H1 (cell line): ENCODE measurements at regions of chr1 and their contacts with region 1.

Region 1: DNA sequence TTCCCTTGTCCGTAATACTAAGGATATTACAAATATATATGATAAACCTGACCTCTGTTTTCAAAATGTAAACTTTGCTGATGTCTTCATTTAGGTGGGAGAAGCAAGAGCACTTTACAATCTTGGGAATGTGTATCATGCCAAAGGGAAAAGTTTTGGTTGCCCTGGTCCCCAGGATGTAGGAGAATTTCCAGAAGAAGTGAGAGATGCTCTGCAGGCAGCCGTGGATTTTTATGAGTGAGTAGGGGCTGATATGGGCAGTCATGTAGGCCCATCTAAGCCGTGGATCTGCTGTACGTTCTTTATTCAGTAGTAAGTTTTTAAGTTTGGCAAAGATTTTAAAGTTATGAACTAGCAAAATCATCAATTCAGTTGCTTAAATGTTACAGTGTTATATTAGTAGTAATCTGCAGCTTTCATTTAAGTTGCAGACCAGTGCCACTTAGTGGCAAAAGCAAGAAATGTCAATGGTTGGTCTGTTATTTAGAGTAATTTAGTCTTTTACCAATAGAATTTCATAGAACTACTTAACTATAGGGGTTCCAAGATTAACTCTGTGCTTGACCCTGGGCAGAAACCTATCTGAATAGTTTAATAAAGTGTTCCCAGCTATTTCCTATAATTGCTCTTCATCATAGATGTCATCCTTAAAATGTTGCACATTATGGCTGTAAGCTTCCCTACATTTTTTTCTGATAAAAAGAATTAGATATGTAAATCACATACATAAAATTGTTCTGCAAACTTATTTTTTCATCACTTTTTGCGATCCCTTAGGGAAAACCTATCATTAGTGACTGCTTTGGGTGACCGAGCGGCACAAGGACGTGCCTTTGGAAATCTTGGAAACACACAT is 21.3 kb downstream of the GPSM2 start:
- DNase-seq: no peak
- H3K4me3 ChIP-seq: no peak overlapping the region
- H3K27ac ChIP-seq: no peak overlapping the region
- H3K4me1 ChIP-seq: no peaks in the 10 kb centered on the region
- H3K27me3 ChIP-seq: no peaks in the 10 kb centered on the region
- CTCF ChIP-seq: peak in 2 of 3 experiments; percentile 54 to 59; a peak in 2 of 4 replicates
- EP300 ChIP-seq: no peak
- POLR2A ChIP-seq: no peak
- RAD21 ChIP-seq: peak; percentile 79 to 84

Region 2: GRCh38 chr1:108828022-108828961 is 69.8 kb before region 1 on chr1:
- CTCF ChIA-PET with region 1: interaction called, 160 read pairs
- POLR2A ChIA-PET with region 1: interaction called, 5 read pairs
- DNase-seq: peak; percentile 60 to 87
- H3K4me3 ChIP-seq: no peak overlapping the region
- H3K27ac ChIP-seq: no peak overlapping the region
- H3K4me1 ChIP-seq: peaks cover 0 to 3% (median 2%) of the 10 kb centered on the region in 4 experiments; a peak in 3 of 7 replicates
- H3K27me3 ChIP-seq: no peaks in the 10 kb centered on the region
- CTCF ChIP-seq: peak; percentile 74 to 88 (median 76)
- EP300 ChIP-seq: no peak
- POLR2A ChIP-seq: no peak
- RAD21 ChIP-seq: peak; percentile 75 to 82

Region 3: GRCh38 chr1:108877348-108878159 is 20.5 kb before region 1 on chr1:
- CTCF ChIA-PET with region 1: interaction called, 11 read pairs
- POLR2A ChIA-PET with region 1: no interaction called
- DNase-seq: no peak
- H3K4me3 ChIP-seq: peak overlapping the region; percentile 68 to 93 (median 76)
- H3K27ac ChIP-seq: no peak overlapping the region
- H3K4me1 ChIP-seq: no peaks in the 10 kb centered on the region
- H3K27me3 ChIP-seq: peaks cover 0 to 3% (median 0%) of the 10 kb centered on the region in 4 experiments; a peak in 1 of 7 replicates
- CTCF ChIP-seq: no peak
- EP300 ChIP-seq: no peak
- POLR2A ChIP-seq: no peak
- RAD21 ChIP-seq: no peak

Region 4: DNA sequence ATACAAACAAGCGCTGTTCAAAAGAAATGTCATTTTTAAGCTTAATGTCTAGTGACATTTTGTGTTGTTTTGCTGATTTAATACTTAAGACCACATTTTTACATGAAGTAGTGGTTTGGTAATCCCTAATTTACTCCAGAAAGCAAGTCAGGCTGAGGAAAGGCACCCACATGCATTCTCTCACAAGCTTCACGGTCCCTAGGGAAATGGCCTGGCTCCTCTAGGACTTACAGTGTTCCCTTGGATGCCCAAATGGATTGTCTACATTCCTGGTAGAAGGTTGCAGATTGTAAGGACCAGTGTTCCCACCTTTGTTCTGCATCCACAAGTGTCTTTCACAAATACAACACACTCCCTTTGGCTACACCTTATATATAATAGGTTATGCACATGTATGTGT is 11.8 kb before region 1 on chr1:
- CTCF ChIA-PET with region 1: interaction called, 12 read pairs
- POLR2A ChIA-PET with region 1: interaction called, 6 read pairs
- DNase-seq: no peak
- H3K4me3 ChIP-seq: no peak overlapping the region
- H3K27ac ChIP-seq: no peak overlapping the region
- H3K4me1 ChIP-seq: no peaks in the 10 kb centered on the region
- H3K27me3 ChIP-seq: no peaks in the 10 kb centered on the region
- CTCF ChIP-seq: no peak
- EP300 ChIP-seq: no peak
- POLR2A ChIP-seq: no peak
- RAD21 ChIP-seq: no peak

Region 5: DNA sequence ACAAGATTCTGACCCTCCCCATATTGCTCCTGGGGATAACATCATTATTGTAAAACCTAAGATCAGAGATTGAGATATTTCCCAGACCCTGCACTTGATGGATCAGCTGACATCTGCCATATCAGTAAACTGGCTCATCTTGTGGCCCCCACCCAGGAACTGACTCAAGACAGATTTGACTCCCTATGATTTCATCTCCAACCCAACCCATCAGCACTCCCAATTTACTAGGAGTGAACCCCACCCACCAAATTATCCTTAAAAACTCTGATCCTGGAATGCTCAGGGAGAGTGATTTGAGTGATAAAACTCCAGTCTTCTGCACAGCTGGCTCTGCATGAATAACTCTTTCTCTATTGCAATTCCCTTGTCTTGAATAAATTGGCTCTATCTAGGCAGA is 71.3 kb after region 1 on chr1:
- CTCF ChIA-PET with region 1: no interaction called
- POLR2A ChIA-PET with region 1: no interaction called
- DNase-seq: no peak
- H3K4me3 ChIP-seq: no peak overlapping the region
- H3K27ac ChIP-seq: no peak overlapping the region
- H3K4me1 ChIP-seq: peaks cover 0 to 3% (median 0%) of the 10 kb centered on the region in 4 experiments; a peak in 1 of 7 replicates
- H3K27me3 ChIP-seq: no peaks in the 10 kb centered on the region
- CTCF ChIP-seq: no peak
- EP300 ChIP-seq: no peak
- POLR2A ChIP-seq: no peak
- RAD21 ChIP-seq: no peak